Caco-2 (cell line): ENCODE measurements at regions of chr10 and their contacts with region 1.

Region 1: GRCh38 chr10:100878291-100878910 is 34.4 kb upstream of the SLF2 start:
- DNase-seq: peak; percentile 77 to 80
- H3K4me3 ChIP-seq: no peak overlapping the region
- H3K4me3 Mint-ChIP-seq: no peak overlapping the region
- H3K27ac Mint-ChIP-seq: peak overlapping the region; percentile 20
- H3K4me1 ChIP-seq: peaks cover 61% of the 10 kb centered on the region
- H3K4me1 Mint-ChIP-seq: peaks cover 60% of the 10 kb centered on the region
- H3K27me3 ChIP-seq: no peaks in the 10 kb centered on the region
- H3K27me3 Mint-ChIP-seq: no peaks in the 10 kb centered on the region
- CTCF ChIP-seq: peak; percentile 66 to 90

Region 2: GRCh38 chr10:100433253-100434240 is 444.9 kb before region 1 on chr10:
- CTCF ChIA-PET with region 1: no interaction called
- POLR2A ChIA-PET with region 1: no interaction called
- intact Hi-C with region 1: loop called (anchors 2 kb)
- DNase-seq: peak; percentile 95
- H3K4me3 ChIP-seq: no peak overlapping the region
- H3K4me3 Mint-ChIP-seq: no peak overlapping the region
- H3K27ac Mint-ChIP-seq: no peak overlapping the region
- H3K4me1 ChIP-seq: no peaks in the 10 kb centered on the region
- H3K4me1 Mint-ChIP-seq: no peaks in the 10 kb centered on the region
- H3K27me3 ChIP-seq: no peaks in the 10 kb centered on the region
- H3K27me3 Mint-ChIP-seq: no peaks in the 10 kb centered on the region
- CTCF ChIP-seq: peak; percentile 96 to 97

Region 3: DNA sequence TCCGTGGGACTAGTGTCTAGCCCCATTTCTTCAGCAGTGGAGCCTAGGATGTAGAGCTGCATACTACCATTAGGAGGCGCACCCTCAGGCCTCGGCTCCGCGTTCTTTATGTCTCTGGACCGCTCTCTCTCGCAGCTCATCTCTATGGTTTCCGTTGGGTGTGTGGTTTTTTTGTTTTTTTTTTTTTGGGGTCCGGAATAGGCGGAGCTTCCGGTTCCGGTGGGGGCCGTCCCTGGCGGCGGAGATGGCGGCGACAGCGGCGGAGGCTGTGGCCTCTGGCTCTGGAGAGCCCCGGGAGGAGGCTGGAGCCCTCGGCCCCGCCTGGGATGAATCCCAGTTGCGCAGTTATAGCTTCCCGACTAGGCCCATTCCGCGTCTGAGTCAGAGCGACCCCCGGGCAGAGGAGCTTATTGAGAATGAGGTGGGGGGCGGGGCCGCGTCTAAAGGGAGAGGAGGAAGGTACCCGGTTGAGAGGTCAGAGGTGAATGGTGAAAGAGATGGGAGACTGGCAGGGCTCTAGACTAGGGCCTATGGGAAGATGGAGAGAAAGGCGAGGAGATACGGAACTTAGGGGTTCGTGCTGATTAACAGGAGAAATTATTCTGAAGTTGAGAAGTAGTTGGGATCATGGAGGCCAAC is 342.6 kb before region 1 on chr10 and contains the start of gene HIF1AN:
- CTCF ChIA-PET with region 1: interaction called, 21 read pairs
- POLR2A ChIA-PET with region 1: interaction called, 12 read pairs
- intact Hi-C with region 1: no loop called
- DNase-seq: peak; percentile 93 to 94
- H3K4me3 ChIP-seq: peak within 1 kb of the TSS; percentile 62
- H3K4me3 Mint-ChIP-seq: peak within 1 kb of the TSS; percentile 29
- H3K27ac Mint-ChIP-seq: no peak within 1 kb of the TSS
- H3K4me1 ChIP-seq: no peaks in the 10 kb centered on the region; the same call in 1 of the 2 replicates
- H3K4me1 Mint-ChIP-seq: no peaks in the 10 kb centered on the region
- H3K27me3 ChIP-seq: no peaks in the 10 kb centered on the region
- H3K27me3 Mint-ChIP-seq: no peaks in the 10 kb centered on the region
- CTCF ChIP-seq: peak; percentile 85 to 97
- total RNA-seq, gene HIF1AN: 71.2 and 72.5 TPM in 2 replicates

Region 4: GRCh38 chr10:100728928-100729861 is 149.2 kb before region 1 on chr10:
- CTCF ChIA-PET with region 1: interaction called, 12 read pairs
- POLR2A ChIA-PET with region 1: no interaction called
- intact Hi-C with region 1: loop called (anchors 1 kb)
- DNase-seq: peak; percentile 83 to 86
- H3K4me3 ChIP-seq: peak overlapping the region; percentile 48
- H3K4me3 Mint-ChIP-seq: peak overlapping the region; percentile 79
- H3K27ac Mint-ChIP-seq: no peak overlapping the region
- H3K4me1 ChIP-seq: peaks cover 32% of the 10 kb centered on the region
- H3K4me1 Mint-ChIP-seq: peaks cover 28% of the 10 kb centered on the region
- H3K27me3 ChIP-seq: no peaks in the 10 kb centered on the region
- H3K27me3 Mint-ChIP-seq: peaks cover 3% of the 10 kb centered on the region
- CTCF ChIP-seq: peak; percentile 60 to 85

Region 5: DNA sequence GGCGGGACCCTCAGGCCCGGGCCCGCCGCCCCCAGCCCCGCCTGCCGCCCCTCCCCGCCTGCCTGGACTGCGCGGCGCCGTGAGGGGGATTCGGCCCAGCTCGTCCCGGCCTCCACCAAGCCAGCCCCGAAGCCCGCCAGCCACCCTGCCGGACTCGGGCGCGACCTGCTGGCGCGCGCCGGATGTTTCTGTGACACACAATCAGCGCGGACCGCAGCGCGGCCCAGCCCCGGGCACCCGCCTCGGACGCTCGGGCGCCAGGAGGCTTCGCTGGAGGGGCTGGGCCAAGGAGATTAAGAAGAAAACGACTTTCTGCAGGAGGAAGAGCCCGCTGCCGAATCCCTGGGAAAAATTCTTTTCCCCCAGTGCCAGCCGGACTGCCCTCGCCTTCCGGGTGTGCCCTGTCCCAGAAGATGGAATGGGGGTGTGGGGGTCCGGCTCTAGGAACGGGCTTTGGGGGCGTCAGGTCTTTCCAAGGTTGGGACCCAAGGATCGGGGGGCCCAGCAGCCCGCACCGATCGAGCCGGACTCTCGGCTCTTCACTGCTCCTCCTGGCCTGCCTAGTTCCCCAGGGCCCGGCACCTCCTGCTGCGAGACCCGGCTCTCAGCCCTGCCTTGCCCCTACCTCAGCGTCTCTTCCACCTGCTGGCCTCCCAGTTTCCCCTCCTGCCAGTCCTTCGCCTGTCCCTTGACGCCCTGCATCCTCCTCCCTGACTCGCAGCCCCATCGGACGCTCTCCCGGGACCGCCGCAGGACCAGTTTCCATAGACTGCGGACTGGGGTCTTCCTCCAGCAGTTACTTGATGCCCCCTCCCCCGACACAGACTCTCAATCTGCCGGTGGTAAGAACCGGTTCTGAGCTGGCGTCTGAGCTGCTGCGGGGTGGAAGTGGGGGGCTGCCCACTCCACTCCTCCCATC is 50.3 kb before region 1 on chr10:
- CTCF ChIA-PET with region 1: interaction called, 12 read pairs
- POLR2A ChIA-PET with region 1: no interaction called
- intact Hi-C with region 1: loop called (anchors 1 kb)
- DNase-seq: peak; percentile 61 to 79
- H3K4me3 ChIP-seq: peak overlapping the region; percentile 77
- H3K4me3 Mint-ChIP-seq: peak overlapping the region; percentile 80
- H3K27ac Mint-ChIP-seq: no peak overlapping the region
- H3K4me1 ChIP-seq: peaks cover 10% of the 10 kb centered on the region; the same call in 1 of the 2 replicates
- H3K4me1 Mint-ChIP-seq: peaks cover 10% of the 10 kb centered on the region
- H3K27me3 ChIP-seq: peaks cover 5% of the 10 kb centered on the region; the same call in 1 of the 2 replicates
- H3K27me3 Mint-ChIP-seq: peaks cover 33% of the 10 kb centered on the region
- CTCF ChIP-seq: peak in 1 of 2 experiments; percentile 57

Region 6: GRCh38 chr10:100930368-100930767 is 52.0 kb after region 1 on chr10:
- CTCF ChIA-PET with region 1: no interaction called
- POLR2A ChIA-PET with region 1: no interaction called
- intact Hi-C with region 1: no loop called
- DNase-seq: no peak
- H3K4me3 ChIP-seq: no peak overlapping the region
- H3K4me3 Mint-ChIP-seq: no peak overlapping the region
- H3K27ac Mint-ChIP-seq: no peak overlapping the region
- H3K4me1 ChIP-seq: 0 out of 2 replicates have a peak, but pooled peaks cover 3% of the 10 kb centered on the region
- H3K4me1 Mint-ChIP-seq: no peaks in the 10 kb centered on the region
- H3K27me3 ChIP-seq: no peaks in the 10 kb centered on the region
- H3K27me3 Mint-ChIP-seq: no peaks in the 10 kb centered on the region
- CTCF ChIP-seq: peak in 1 of 2 experiments; percentile 12

Region 7: DNA sequence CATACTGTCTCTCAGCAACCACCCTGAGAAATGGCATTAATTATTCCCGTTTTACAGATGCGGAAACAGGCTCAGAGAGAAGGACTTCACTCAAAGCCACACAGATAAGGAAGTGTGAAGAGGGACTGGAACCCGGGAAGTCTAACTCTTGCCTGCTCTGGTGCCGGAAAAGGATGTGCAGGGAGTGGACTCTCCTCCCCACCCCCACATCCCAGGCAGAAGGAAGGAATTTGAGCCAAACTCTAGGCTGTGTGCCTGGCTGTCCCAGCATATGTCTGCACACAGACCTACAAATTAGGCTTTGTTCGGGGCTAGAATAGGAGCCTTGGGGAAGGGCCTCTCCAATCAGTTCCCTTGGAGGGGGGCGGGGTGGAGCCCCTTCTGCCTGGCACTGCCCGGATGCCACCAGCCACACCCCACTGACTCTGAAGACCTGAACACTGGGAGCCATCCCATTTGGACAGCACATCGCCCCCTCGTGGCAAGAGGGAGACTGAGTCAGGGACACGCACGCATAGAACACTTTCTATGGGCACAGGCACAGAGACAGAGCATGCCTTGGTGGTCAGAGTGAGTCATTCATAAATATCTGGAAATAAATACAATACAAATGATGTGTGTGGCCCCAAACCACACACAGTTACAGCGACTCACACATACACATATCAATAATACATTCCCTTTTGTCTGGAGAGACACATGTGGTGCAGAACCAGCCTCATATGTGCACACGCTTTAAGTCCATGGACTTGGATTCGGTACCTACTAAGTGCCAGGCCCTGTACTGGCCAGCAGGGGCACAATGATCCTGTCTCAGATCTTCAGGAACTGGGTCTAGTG is 134.3 kb after region 1 on chr10:
- CTCF ChIA-PET with region 1: interaction called, 7 read pairs
- POLR2A ChIA-PET with region 1: no interaction called
- intact Hi-C with region 1: loop called (anchors 5 kb)
- DNase-seq: peak; percentile 84 to 85
- H3K4me3 ChIP-seq: no peak overlapping the region
- H3K4me3 Mint-ChIP-seq: no peak overlapping the region
- H3K27ac Mint-ChIP-seq: peak overlapping the region; percentile 2
- H3K4me1 ChIP-seq: no peaks in the 10 kb centered on the region
- H3K4me1 Mint-ChIP-seq: peaks cover 15% of the 10 kb centered on the region
- H3K27me3 ChIP-seq: no peaks in the 10 kb centered on the region
- H3K27me3 Mint-ChIP-seq: no peaks in the 10 kb centered on the region
- CTCF ChIP-seq: peak; percentile 72 to 84